SK-N-SH (cell line): ENCODE measurements at regions of chr4 and their contacts with region 1.

Region 1: GRCh38 chr4:25925486-25926201 is 11.6 kb downstream of the SMIM20 start:
- DNase-seq: peak; percentile 64
- H3K4me3 ChIP-seq: no peak overlapping the region
- H3K27ac ChIP-seq: no peak overlapping the region
- H3K4me1 ChIP-seq: no peaks in the 10 kb centered on the region; a peak in 3 of 4 replicates
- H3K27me3 ChIP-seq: no peaks in the 10 kb centered on the region
- CTCF ChIP-seq: peak; percentile 52
- EP300 ChIP-seq: no peak
- RAD21 ChIP-seq: peak; percentile 72

Region 2: DNA sequence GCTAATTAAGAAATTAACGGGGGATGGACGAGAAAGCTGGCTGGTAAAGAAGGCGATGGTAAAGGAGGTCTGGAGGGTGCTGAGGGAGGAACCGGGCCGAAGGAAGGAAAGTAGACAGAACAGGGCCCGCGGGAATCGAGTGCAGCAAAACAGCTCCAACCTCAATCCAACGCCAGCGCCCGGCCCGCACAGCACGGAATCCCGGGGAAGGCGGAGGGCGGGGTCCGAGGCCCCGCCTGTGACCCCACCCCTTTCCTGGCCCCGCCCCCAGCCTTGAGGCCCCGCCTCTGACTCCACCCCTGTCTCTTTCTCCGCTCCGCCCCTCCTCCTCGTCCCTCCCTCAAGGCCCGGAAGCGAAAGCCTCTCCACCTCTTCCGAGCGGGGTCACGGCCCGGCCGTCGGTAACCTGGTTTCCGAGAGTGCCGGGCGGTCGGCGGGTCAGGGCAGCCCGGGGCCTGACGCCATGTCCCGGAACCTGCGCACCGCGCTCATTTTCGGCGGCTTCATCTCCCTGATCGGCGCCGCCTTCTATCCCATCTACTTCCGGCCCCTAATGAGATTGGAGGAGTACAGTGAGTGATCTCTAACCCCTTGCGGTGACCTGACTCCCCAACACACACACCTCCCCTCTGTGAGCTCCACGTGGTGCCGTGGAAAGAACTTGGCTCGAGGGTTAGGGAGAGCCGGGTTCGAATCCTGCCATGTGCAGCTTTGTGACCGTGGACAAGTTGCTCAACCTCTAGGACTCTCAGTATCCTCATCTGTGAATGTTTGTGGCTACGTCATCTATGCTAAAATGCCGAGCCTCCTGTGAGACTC is 11.6 kb before region 1 on chr4 and contains the start of gene SMIM20:
- CTCF ChIA-PET with region 1: interaction called, 14 read pairs
- POLR2A ChIA-PET with region 1: no interaction called
- DNase-seq: peak; percentile 97
- H3K4me3 ChIP-seq: peak within 1 kb of the TSS; percentile 64 to 89
- H3K27ac ChIP-seq: peak within 1 kb of the TSS; percentile 77 to 89
- H3K4me1 ChIP-seq: peaks cover 10 to 25% of the 10 kb centered on the region in 2 experiments; a peak in 2 of 4 replicates
- H3K27me3 ChIP-seq: no peaks in the 10 kb centered on the region
- CTCF ChIP-seq: no peak
- EP300 ChIP-seq: no peak
- RAD21 ChIP-seq: 0 out of 2 replicates have a peak, but pooled peaks have one; percentile 0
- polyA plus RNA-seq, gene SMIM20: 39.2 and 39.4 TPM in 2 replicates

Region 3: GRCh38 chr4:25938787-25939186 is 13.1 kb after region 1 on chr4:
- CTCF ChIA-PET with region 1: interaction called, 10 read pairs
- POLR2A ChIA-PET with region 1: no interaction called
- DNase-seq: no peak
- H3K4me3 ChIP-seq: no peak overlapping the region
- H3K27ac ChIP-seq: no peak overlapping the region
- H3K4me1 ChIP-seq: peaks cover 0 to 5% of the 10 kb centered on the region in 2 experiments; a peak in 2 of 4 replicates
- H3K27me3 ChIP-seq: no peaks in the 10 kb centered on the region
- CTCF ChIP-seq: no peak
- EP300 ChIP-seq: no peak
- RAD21 ChIP-seq: no peak

Region 4: DNA sequence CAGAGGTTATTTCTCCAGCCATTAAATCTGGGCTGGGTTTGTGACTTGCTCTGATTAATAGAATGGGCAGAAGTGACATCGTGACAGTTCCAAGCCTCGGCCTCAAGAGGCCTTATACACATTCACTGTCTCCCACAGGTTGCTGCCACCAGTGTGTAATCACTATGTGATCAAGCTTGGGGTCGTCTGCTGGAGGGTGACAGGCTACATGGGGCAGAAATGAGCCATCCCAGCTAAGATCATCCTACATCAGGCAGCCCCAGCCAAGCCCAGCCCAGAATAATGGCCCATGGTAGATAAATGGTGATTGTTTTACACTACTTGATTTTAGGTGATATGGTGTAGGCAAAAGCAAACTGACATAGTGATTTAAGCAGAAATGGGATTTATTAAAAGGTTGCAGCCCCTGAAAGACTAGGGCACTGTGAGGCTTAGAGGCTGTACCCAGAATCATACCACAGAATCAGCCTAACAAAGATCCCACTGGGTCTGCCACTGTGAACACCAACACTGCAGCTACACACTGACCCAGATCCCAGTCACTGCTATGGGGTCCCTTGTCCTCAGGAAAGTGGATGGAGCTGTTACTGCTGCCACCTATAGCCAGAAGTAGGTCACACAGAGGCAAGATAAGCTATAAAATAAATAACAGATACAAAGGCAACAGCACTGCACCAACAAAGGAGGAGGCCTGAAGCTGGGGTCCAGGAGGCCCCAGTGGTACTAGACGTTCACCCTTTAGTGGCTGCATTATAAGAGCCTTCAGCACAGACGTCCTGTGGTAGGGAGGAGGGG is 235.6 kb after region 1 on chr4:
- CTCF ChIA-PET with region 1: interaction called, 18 read pairs
- POLR2A ChIA-PET with region 1: no interaction called
- DNase-seq: peak; percentile 58
- H3K4me3 ChIP-seq: no peak overlapping the region
- H3K27ac ChIP-seq: no peak overlapping the region
- H3K4me1 ChIP-seq: peaks cover 0 to 2% of the 10 kb centered on the region in 2 experiments; a peak in 1 of 4 replicates
- H3K27me3 ChIP-seq: no peaks in the 10 kb centered on the region
- CTCF ChIP-seq: peak; percentile 25; the same call in 1 of the 2 replicates
- EP300 ChIP-seq: no peak
- RAD21 ChIP-seq: peak; percentile 67